HCT116 (cell line): ENCODE measurements at regions of chr10 and their contacts with region 1.

Region 1: GRCh38 chr10:43671656-43672531 is 23.2 kb upstream of the ZNF32 start:
- DNase-seq: peak; percentile 47
- ATAC-seq: peak; percentile 88
- H3K4me3 ChIP-seq: no peak overlapping the region
- H3K27ac ChIP-seq: no peak overlapping the region
- H3K4me1 ChIP-seq: no peaks in the 10 kb centered on the region
- H3K27me3 ChIP-seq: no peaks in the 10 kb centered on the region
- CTCF ChIP-seq: peak; percentile 56 to 80 (median 64)
- POLR2A ChIP-seq: no peak
- RAD21 ChIP-seq: peak; percentile 88

Region 2: DNA sequence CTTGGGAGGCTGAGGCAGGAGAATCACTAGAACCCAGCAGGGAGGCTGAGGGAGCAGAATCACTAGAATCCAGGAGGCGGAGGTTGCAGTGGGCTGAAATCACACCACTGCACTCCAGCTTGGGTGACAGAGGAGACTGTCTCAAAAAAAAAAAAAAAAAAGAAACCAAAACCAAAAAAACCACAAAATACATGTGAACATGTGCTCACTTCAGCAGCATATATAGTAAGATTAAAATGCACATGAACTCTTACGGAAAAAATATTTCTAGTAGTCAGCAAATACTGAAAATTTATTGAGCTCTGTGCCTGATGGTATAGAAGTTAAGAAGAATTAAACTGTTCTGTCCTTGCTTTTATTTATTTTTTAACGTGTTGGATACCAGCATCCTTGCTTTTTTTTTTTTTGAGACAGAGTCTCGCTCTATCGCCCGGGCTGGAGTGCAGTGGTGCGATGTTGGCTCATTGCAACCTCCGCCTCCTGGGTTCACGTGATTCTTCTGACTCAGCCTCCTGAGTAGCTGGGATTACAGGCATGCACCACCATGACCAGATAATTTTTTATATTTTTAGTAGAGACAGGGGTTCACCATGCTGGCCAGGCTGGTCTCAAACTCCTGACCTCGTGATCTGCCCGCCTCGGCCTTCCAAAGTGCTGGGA is 244.6 kb before region 1 on chr10:
- CTCF ChIA-PET with region 1: no interaction called
- POLR2A ChIA-PET with region 1: no interaction called
- RAD21 ChIA-PET with region 1: no interaction called
- intact Hi-C with region 1: no loop called
- DNase-seq: no peak
- ATAC-seq: no peak
- H3K4me3 ChIP-seq: no peak overlapping the region
- H3K27ac ChIP-seq: no peak overlapping the region
- H3K4me1 ChIP-seq: peaks cover 4 to 6% of the 10 kb centered on the region in 2 experiments; a peak in 2 of 4 replicates
- H3K27me3 ChIP-seq: no peaks in the 10 kb centered on the region
- CTCF ChIP-seq: no peak
- POLR2A ChIP-seq: no peak
- RAD21 ChIP-seq: no peak

Region 3: DNA sequence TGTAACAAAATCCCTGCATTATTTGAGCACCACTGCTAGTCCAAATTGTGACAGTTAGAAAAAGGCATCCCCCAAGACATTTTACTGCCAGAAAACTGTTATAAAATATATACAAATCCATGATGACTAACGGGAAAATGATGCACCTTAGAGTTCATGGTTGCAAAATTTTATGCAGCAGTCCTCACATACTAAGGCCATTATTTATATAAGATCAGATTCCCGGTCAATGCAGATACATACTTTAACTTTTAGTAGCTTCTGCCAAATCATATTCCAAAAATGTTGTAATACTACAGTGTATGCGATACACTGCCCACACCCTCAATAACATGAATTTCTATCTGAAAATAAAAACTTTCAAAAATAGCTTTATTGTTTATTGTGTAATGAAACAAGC is 216.7 kb after region 1 on chr10:
- CTCF ChIA-PET with region 1: no interaction called
- POLR2A ChIA-PET with region 1: no interaction called
- RAD21 ChIA-PET with region 1: no interaction called
- intact Hi-C with region 1: loop called (anchors 10 kb)
- DNase-seq: no peak
- ATAC-seq: no peak
- H3K4me3 ChIP-seq: no peak overlapping the region
- H3K27ac ChIP-seq: no peak overlapping the region
- H3K4me1 ChIP-seq: no peaks in the 10 kb centered on the region
- H3K27me3 ChIP-seq: peaks cover 35% of the 10 kb centered on the region; the same call in 1 of the 2 replicates
- CTCF ChIP-seq: no peak
- POLR2A ChIP-seq: no peak
- RAD21 ChIP-seq: no peak

Region 4: DNA sequence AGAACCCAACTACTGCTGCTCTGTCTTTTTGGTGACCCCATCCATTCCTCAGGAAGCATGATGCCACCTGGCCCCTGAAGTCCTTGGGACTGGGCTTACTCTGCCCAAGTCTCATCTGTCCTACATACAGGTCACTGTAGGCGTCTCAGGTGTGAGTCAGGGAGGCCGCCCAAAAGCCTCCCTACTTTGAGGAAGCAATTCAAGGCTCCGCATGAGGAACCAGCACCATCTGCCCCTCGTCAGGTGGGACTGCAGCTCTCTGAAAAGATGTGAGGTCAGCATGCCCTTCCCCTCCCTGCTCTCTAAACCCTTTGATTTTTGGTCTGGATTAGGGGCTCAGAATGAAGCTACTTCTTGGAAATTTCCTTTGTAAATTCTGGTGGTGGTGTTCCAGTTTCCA is 358.2 kb after region 1 on chr10:
- CTCF ChIA-PET with region 1: no interaction called
- POLR2A ChIA-PET with region 1: no interaction called
- RAD21 ChIA-PET with region 1: no interaction called
- intact Hi-C with region 1: loop called (anchors 2 kb)
- DNase-seq: no peak
- ATAC-seq: peak; percentile 58; the same call in 1 of the 2 replicates
- H3K4me3 ChIP-seq: no peak overlapping the region
- H3K27ac ChIP-seq: no peak overlapping the region
- H3K4me1 ChIP-seq: no peaks in the 10 kb centered on the region
- H3K27me3 ChIP-seq: peaks cover 23% of the 10 kb centered on the region
- CTCF ChIP-seq: peak in 2 of 3 experiments; percentile 10 to 27; a peak in 2 of 6 replicates
- POLR2A ChIP-seq: no peak
- RAD21 ChIP-seq: peak; percentile 39

Region 5: GRCh38 chr10:44310762-44311562 is 639.1 kb after region 1 on chr10:
- CTCF ChIA-PET with region 1: no interaction called
- POLR2A ChIA-PET with region 1: no interaction called
- RAD21 ChIA-PET with region 1: no interaction called
- intact Hi-C with region 1: loop called (anchors 1 kb)
- DNase-seq: peak; percentile 54
- ATAC-seq: peak; percentile 98
- H3K4me3 ChIP-seq: no peak overlapping the region
- H3K27ac ChIP-seq: no peak overlapping the region
- H3K4me1 ChIP-seq: peaks cover 0 to 8% of the 10 kb centered on the region in 2 experiments; a peak in 2 of 4 replicates
- H3K27me3 ChIP-seq: no peaks in the 10 kb centered on the region
- CTCF ChIP-seq: peak; percentile 74 to 86 (median 76)
- POLR2A ChIP-seq: no peak
- RAD21 ChIP-seq: peak; percentile 62

Region 6: DNA sequence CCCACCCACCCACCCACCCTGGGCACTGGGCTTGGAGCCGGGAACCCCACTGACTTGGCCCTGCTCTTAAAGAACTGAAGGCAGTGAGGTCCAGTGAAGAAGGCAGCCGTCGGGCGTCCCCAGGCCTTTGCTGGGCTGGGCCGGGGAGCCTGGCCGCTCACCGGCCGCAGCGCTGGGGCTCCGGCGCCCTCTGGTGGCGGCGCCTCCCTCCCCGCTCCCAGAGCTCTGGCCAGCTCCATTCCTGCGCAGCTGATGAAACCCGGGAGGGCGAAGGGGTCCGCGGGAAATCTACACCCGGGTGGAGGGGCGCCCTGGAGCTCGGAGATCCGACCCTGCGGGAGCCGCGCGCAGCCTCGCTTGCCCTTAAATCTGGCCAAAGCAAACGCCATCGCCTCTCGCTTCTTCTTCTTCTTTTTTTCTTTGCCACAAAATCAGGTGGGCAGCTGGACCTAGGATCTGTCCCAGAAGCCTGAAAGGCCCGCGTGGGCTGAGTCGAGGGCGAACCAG is 714.7 kb after region 1 on chr10:
- CTCF ChIA-PET with region 1: interaction called, 13 read pairs
- POLR2A ChIA-PET with region 1: no interaction called
- RAD21 ChIA-PET with region 1: no interaction called
- intact Hi-C with region 1: loop called (anchors 1 kb)
- DNase-seq: no peak
- ATAC-seq: peak; percentile 96
- H3K4me3 ChIP-seq: no peak overlapping the region
- H3K27ac ChIP-seq: no peak overlapping the region
- H3K4me1 ChIP-seq: no peaks in the 10 kb centered on the region
- H3K27me3 ChIP-seq: 0 out of 2 replicates have a peak, but pooled peaks cover 2% of the 10 kb centered on the region
- CTCF ChIP-seq: peak; percentile 62 to 93 (median 74)
- POLR2A ChIP-seq: no peak
- RAD21 ChIP-seq: peak; percentile 82

Region 7: DNA sequence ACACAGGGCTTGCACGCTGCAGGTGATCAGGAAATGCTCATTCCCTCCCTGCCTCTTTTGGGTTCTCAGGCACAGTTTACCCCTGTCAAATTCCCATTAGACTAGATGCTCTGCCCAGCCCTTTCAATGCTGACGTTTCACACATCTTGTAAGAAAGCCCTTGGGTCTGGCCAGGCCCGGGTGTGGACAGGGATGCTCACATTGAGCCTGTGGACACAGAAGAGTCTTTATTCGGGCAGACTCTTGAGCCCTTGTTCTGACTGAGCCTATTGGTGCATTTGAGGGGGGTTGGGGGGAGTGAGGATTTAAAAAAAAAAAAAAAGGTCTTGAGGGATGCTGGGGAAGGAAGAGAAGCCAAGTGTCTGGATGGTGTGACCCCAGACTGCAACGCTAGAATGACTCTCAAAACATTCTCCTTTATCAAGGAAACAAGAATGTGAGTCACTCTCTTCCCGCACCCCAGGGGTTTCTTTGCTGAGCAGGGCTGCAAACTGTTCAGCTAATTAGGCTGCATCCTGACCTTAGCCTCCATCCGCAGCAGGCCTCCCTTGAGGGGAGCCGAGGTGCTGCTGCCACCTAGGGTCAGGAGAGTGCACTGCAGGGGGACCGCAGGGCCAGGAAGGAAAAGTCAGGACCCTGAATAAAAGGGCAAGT is 1185.6 kb after region 1 on chr10:
- CTCF ChIA-PET with region 1: no interaction called
- POLR2A ChIA-PET with region 1: no interaction called
- RAD21 ChIA-PET with region 1: no interaction called
- intact Hi-C with region 1: loop called (anchors 1 kb)
- DNase-seq: no peak
- ATAC-seq: peak; percentile 77
- H3K4me3 ChIP-seq: no peak overlapping the region
- H3K27ac ChIP-seq: no peak overlapping the region
- H3K4me1 ChIP-seq: no peaks in the 10 kb centered on the region
- H3K27me3 ChIP-seq: no peaks in the 10 kb centered on the region
- CTCF ChIP-seq: peak; percentile 41 to 99 (median 98); a peak in 5 of 6 replicates
- POLR2A ChIP-seq: no peak
- RAD21 ChIP-seq: peak; percentile 77

Region 8: DNA sequence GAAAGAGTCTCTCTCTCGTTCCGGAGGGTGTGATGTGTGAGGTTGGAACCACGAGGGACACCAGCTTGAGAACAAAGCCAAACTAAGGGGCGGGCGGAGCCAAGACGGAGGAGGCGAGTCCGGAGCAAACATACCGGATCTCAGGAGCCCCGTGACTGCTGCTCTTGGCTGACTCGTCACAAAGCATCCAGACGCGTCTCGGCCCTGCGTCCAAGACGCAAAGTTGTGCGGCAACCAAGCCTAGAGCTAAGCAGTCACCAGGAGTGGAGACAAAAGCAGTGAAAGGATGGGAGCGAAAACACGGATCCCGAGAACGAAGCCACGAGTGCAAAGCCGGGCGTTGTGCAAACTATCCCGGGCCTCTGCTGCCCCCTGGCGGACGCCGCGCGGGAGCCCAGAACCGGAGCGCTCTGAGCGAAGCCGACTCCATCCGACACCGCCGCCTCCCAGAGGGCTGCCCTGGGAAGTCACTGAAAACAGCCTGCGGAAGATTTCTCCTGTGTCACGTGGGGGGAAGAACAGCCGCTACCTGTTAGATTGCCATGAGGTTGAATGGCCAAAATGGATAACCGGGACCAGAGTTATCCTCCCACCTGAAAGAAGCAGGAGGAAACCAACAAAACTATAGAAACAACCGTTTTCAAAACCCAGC is 1192.9 kb after region 1 on chr10:
- CTCF ChIA-PET with region 1: no interaction called
- POLR2A ChIA-PET with region 1: no interaction called
- RAD21 ChIA-PET with region 1: no interaction called
- intact Hi-C with region 1: loop called (anchors 2 kb)
- DNase-seq: peak; percentile 60
- ATAC-seq: peak; percentile 96
- H3K4me3 ChIP-seq: peak overlapping the region; percentile 40 to 51
- H3K27ac ChIP-seq: no peak overlapping the region; the same call in 1 of the 2 replicates
- H3K4me1 ChIP-seq: peaks cover 10 to 18% of the 10 kb centered on the region in 2 experiments
- H3K27me3 ChIP-seq: peaks cover 7% of the 10 kb centered on the region; the same call in 1 of the 2 replicates
- CTCF ChIP-seq: peak; percentile 82 to 98 (median 97)
- POLR2A ChIP-seq: no peak
- RAD21 ChIP-seq: peak; percentile 80